Naive thymus-derived CD4-positive, alpha-beta T cell (primary cell): ENCODE measurements at regions of chr2 and their contacts with region 1.

Region 1: DNA sequence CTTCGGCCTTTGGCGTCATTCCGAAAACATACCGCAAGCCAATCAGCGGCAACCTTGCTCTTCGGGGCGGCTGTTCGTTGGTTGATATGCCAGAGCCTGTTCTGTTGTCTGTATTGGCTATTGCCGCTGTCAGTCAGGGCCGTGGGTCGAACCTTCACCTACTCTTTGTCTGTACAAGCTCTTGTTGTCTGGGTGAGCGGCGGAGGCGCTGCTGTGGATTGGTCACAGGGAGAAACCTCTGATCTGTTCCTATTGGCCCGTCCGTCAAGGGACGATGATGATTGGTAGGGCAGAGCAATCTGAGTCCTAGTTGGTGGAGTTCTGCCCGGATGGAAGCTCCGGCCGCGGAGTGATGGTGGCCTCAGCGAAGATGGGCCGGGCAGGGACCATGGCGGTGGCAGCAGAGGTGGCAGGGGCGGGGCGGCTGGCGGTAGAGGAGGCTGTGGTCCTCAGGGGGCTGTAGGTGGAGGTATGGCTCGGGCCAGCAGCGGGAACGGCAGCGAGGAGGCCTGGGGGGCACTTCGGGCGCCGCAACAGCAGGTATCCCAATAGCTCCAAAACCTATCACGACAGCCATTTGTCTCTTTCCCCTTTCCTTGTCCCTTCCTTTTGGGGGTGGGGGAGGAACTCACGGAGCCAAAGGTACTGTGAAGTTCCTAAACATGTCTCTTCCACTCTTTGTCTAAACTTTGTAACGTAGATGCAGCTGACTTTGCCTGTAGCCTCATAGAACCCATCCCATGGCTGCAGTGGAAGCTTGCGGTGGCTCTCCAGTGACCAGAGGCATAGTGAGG is at the start of gene WBP1:
- DNase-seq: peak in 8 of 9 donors; percentile 85 to 100 (median 100)
- ATAC-seq: peak; percentile 89
- H3K4me3 ChIP-seq: peak within 1 kb of the TSS; percentile 70
- H3K4me3 Mint-ChIP-seq: peak within 1 kb of the TSS; percentile 87 to 99 (median 96)
- H3K27ac ChIP-seq: peak within 1 kb of the TSS; percentile 100
- H3K27ac Mint-ChIP-seq: peak within 1 kb of the TSS; percentile 88 to 100 (median 99)
- H3K4me1 ChIP-seq: peaks cover 30 to 34% of the 10 kb centered on the region in 2 donors
- H3K4me1 Mint-ChIP-seq: peaks cover 38 to 68% (median 58%) of the 10 kb centered on the region in 7 donors
- H3K27me3 ChIP-seq: no peaks in the 10 kb centered on the region
- H3K27me3 Mint-ChIP-seq: peaks cover 0 to 2% (median 0%) of the 10 kb centered on the region in 5 donors
- total RNA-seq, gene WBP1: 53.6 to 127 (median 85.4) TPM

Region 2: GRCh38 chr2:74119912-74120825 is 338.2 kb before region 1 on chr2:
- CTCF ChIA-PET with region 1: no interaction called
- POLR2A ChIA-PET with region 1: interaction called, 3 read pairs
- intact Hi-C with region 1: loop called in 1 of 2 experiments (anchors 1 kb)
- DNase-seq: peak; percentile 69 to 91 (median 80)
- ATAC-seq: peak; percentile 98
- H3K4me3 ChIP-seq: peak overlapping the region; percentile 89
- H3K4me3 Mint-ChIP-seq: peak overlapping the region; percentile 82 to 92 (median 88)
- H3K27ac ChIP-seq: peak overlapping the region; percentile 83
- H3K27ac Mint-ChIP-seq: peak overlapping the region; percentile 79 to 96 (median 91)
- H3K4me1 ChIP-seq: no peaks in the 10 kb centered on the region
- H3K4me1 Mint-ChIP-seq: peaks cover 8 to 12% (median 9%) of the 10 kb centered on the region in 7 donors
- H3K27me3 ChIP-seq: no peaks in the 10 kb centered on the region
- H3K27me3 Mint-ChIP-seq: peaks cover 0 to 5% (median 2%) of the 10 kb centered on the region in 5 donors

Region 3: GRCh38 chr2:74391580-74392448 is 66.5 kb before region 1 on chr2:
- CTCF ChIA-PET with region 1: no interaction called
- POLR2A ChIA-PET with region 1: interaction called, 5 read pairs
- intact Hi-C with region 1: loop called (anchors 1 kb)
- DNase-seq: peak; percentile 89 to 99 (median 93)
- ATAC-seq: peak; percentile 97
- H3K4me3 ChIP-seq: peak overlapping the region; percentile 78
- H3K4me3 Mint-ChIP-seq: peak overlapping the region in 4 of 10 donors; percentile 40 to 100 (median 92)
- H3K27ac ChIP-seq: peak overlapping the region; percentile 91
- H3K27ac Mint-ChIP-seq: peak overlapping the region in 8 of 9 donors; percentile 98 to 100 (median 99)
- H3K4me1 ChIP-seq: peaks cover 8 to 25% of the 10 kb centered on the region in 2 donors
- H3K4me1 Mint-ChIP-seq: peaks cover 0 to 15% (median 5%) of the 10 kb centered on the region in 7 donors
- H3K27me3 ChIP-seq: no peaks in the 10 kb centered on the region
- H3K27me3 Mint-ChIP-seq: peaks cover 0 to 14% (median 5%) of the 10 kb centered on the region in 5 donors

Region 4: GRCh38 chr2:74472086-74472944 is 14.0 kb after region 1 on chr2 and contains the start of gene MRPL53:
- CTCF ChIA-PET with region 1: interaction called, 5 read pairs
- POLR2A ChIA-PET with region 1: interaction called, 177 read pairs
- intact Hi-C with region 1: loop called (anchors 1 kb)
- DNase-seq: peak; percentile 91 to 98 (median 95)
- ATAC-seq: peak; percentile 96
- H3K4me3 ChIP-seq: peak within 1 kb of the TSS; percentile 89
- H3K4me3 Mint-ChIP-seq: peak within 1 kb of the TSS; percentile 88 to 99 (median 98)
- H3K27ac ChIP-seq: peak within 1 kb of the TSS; percentile 91
- H3K27ac Mint-ChIP-seq: peak within 1 kb of the TSS; percentile 94 to 99 (median 98)
- H3K4me1 ChIP-seq: peaks cover 14 to 19% of the 10 kb centered on the region in 2 donors
- H3K4me1 Mint-ChIP-seq: peaks cover 9 to 32% (median 29%) of the 10 kb centered on the region in 7 donors
- H3K27me3 ChIP-seq: no peaks in the 10 kb centered on the region
- H3K27me3 Mint-ChIP-seq: no peaks in the 10 kb centered on the region
- total RNA-seq, gene MRPL53: 45.7 to 108 (median 94.5) TPM

Region 5: DNA sequence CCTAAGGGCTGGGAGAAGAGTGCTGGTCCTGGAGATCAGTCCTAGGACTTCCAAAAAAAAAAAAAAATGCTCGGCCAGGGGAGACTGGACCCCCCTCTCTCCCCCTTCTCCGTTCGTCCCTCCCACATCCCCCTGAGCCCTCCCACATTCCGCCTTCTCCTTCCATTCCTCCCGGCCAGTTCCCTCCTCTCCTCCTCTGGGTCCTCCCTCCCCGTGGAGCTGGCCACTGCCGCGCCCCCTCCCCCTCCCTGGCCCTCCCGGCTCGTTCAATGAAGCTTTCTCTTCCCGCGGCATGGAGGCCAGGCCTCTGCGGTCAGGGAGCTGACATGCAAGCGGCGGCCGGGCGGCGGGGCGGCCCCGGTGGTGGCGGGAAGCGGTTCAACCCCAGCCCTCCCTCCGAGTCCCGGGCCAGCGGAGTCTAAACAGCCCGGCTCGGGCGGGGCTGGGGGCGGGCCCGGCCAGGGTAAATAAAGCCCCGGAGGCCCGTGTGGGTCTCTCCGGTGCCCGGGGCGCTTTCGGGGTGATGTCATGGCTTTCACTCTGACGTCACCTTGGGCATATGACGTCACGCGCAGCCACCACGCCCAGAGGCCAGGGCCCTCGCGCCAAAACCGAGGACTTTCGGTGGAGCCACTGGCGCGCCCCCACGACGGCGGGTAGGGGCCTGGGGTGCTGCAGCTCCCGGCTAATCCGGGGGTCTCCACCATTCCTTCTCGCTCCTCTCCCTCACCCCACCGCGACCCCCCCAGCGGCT is 95.7 kb after region 1 on chr2 and contains the start of gene LOXL3:
- CTCF ChIA-PET with region 1: no interaction called
- POLR2A ChIA-PET with region 1: interaction called, 3 read pairs
- intact Hi-C with region 1: loop called in 1 of 2 experiments (anchors 1 kb)
- DNase-seq: peak in 8 of 9 donors; percentile 63 to 87 (median 76)
- ATAC-seq: peak; percentile 67
- H3K4me3 ChIP-seq: peak within 1 kb of the TSS; percentile 70
- H3K4me3 Mint-ChIP-seq: peak within 1 kb of the TSS; percentile 85 to 96 (median 92)
- H3K27ac ChIP-seq: peak within 1 kb of the TSS; percentile 76
- H3K27ac Mint-ChIP-seq: peak within 1 kb of the TSS; percentile 62 to 95 (median 86)
- H3K4me1 ChIP-seq: peaks cover 7 to 17% of the 10 kb centered on the region in 2 donors
- H3K4me1 Mint-ChIP-seq: peaks cover 9 to 31% (median 18%) of the 10 kb centered on the region in 7 donors
- H3K27me3 ChIP-seq: peaks cover 0 to 10% of the 10 kb centered on the region in 2 donors
- H3K27me3 Mint-ChIP-seq: peaks cover 21 to 27% (median 24%) of the 10 kb centered on the region in 5 donors
- total RNA-seq, gene LOXL3: 0.50 to 6.9 (median 0.81) TPM

Region 6: GRCh38 chr2:74833418-74834233 is 375.3 kb after region 1 on chr2 and contains the start of gene HK2:
- CTCF ChIA-PET with region 1: no interaction called
- POLR2A ChIA-PET with region 1: interaction called, 3 read pairs
- intact Hi-C with region 1: loop called in 1 of 2 experiments (anchors 2 kb)
- DNase-seq: peak; percentile 68 to 87 (median 78)
- ATAC-seq: peak; percentile 91
- H3K4me3 ChIP-seq: peak within 1 kb of the TSS; percentile 72
- H3K4me3 Mint-ChIP-seq: peak within 1 kb of the TSS; percentile 89 to 97 (median 94)
- H3K27ac ChIP-seq: peak within 1 kb of the TSS; percentile 67
- H3K27ac Mint-ChIP-seq: peak within 1 kb of the TSS; percentile 35 to 95 (median 91)
- H3K4me1 ChIP-seq: peaks cover 14 to 32% of the 10 kb centered on the region in 2 donors
- H3K4me1 Mint-ChIP-seq: peaks cover 28 to 49% (median 33%) of the 10 kb centered on the region in 7 donors
- H3K27me3 ChIP-seq: no peaks in the 10 kb centered on the region
- H3K27me3 Mint-ChIP-seq: peaks cover 0 to 7% (median 0%) of the 10 kb centered on the region in 5 donors
- total RNA-seq, gene HK2: 11.1 to 74.6 (median 17.7) TPM